AG04449 (cell line): ENCODE measurements at regions of chr11 and their contacts with region 1.

Region 1: DNA sequence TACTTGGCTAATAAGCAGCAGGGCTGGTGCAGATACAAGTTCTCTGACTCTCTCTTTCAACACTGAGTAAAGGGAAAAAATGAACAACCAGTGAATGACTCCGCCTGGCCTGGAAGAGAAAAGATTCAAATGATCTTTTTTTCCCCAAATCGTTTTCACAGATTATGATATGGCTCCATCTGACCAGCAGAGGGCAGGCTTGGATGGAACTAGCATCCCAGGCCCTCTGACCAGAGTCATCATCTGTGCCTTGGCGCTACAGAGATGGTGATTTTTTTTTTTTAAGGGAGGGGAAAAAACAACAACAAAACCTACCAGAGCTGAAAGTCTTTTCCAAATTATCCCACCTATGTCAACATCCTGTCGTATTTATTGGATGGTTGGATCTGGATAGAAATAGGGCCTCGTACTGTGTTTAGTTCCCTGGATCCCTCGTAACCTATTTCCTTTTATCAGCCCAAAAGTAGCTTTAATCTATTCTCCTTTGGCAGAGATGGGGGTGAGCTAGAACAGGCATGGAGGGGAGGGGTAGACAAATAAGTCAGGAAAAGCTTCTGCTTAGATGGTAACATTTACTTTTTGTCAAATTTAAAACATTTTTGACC is 69.7 kb downstream of the PRSS23 start:
- DNase-seq: no peak
- H3K4me3 ChIP-seq: no peak overlapping the region
- CTCF ChIP-seq: peak; percentile 76

Region 2: GRCh38 chr11:86698639-86699400 is 171.2 kb before region 1 on chr11:
- CTCF ChIA-PET with region 1: no interaction called
- POLR2A ChIA-PET with region 1: no interaction called
- DNase-seq: no peak
- H3K4me3 ChIP-seq: no peak overlapping the region
- CTCF ChIP-seq: no peak

Region 3: DNA sequence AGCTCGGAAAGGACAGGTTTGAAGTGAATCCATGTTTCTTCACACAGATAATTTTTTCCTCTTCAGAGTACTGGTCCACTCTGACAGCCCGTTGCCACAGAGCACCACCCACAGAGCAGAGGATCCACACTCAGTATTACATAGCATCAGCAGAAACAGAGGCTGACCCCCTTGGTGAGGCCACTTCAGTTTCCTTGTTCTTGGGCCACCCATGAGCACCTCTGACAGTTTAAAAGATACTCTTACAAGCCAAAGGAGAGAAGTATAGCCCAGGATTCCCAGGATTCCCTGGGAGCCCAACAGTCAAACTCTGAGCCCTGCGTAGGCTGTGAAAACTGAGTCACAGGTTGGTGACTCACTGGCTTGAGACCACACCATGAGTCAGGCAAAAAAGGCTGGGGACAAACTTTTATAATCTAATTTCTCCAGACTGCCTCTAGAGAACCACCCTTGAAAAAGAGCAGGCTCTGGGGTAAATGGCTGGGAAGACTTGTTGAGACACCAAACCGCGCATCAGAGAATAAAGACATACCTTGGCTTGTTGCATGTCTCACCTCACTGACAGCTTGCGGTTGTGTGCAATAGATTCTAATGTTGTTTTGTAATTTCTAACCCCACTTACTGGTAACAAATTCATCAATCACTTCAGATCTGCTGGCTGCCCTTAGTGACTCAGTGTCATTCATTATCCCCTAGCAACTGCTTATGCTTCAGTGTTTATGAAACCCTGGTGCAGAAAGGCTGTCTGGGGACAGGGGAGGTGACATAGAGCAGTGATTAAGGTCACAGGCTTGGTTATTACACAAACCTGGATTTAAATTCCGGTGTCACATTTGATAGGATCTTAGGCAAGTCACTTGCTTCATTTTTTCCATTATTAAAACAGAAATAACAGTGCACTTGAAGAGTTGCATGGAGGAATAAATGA is 126.6 kb before region 1 on chr11:
- CTCF ChIA-PET with region 1: no interaction called
- POLR2A ChIA-PET with region 1: no interaction called
- DNase-seq: peak; percentile 89
- H3K4me3 ChIP-seq: no peak overlapping the region
- CTCF ChIP-seq: no peak

Region 4: GRCh38 chr11:86811637-86812321 is 58.3 kb before region 1 on chr11:
- CTCF ChIA-PET with region 1: no interaction called
- POLR2A ChIA-PET with region 1: no interaction called
- DNase-seq: no peak
- H3K4me3 ChIP-seq: no peak overlapping the region
- CTCF ChIP-seq: no peak

Region 5: GRCh38 chr11:86848861-86849260 is 21.2 kb before region 1 on chr11:
- CTCF ChIA-PET with region 1: interaction called, 18 read pairs
- POLR2A ChIA-PET with region 1: no interaction called
- DNase-seq: no peak
- H3K4me3 ChIP-seq: no peak overlapping the region
- CTCF ChIP-seq: no peak

Region 6: GRCh38 chr11:86896441-86896841 is 26.4 kb after region 1 on chr11:
- CTCF ChIA-PET with region 1: interaction called, 26 read pairs
- POLR2A ChIA-PET with region 1: no interaction called
- DNase-seq: no peak
- H3K4me3 ChIP-seq: no peak overlapping the region
- CTCF ChIP-seq: no peak

Region 7: DNA sequence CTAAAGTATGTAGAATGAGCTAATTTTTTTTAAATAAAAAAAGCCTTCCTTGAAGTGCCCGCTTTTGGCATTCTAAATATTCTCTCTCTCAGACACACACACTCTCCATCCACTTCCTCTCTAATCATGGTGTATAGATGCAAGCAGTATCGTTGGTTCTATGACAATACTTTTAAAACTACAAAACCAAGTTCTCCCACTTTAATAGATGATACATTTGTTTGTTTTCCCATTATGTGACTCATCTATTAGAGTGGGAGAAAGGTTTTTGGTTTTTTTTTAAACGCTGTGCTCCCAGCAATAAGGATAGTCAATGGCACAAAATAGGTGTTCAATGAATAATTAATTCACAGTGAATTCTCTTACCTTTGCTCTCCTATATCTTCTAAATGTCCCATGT is 40.5 kb after region 1 on chr11:
- CTCF ChIA-PET with region 1: interaction called, 397 read pairs
- POLR2A ChIA-PET with region 1: no interaction called
- DNase-seq: no peak
- H3K4me3 ChIP-seq: no peak overlapping the region
- CTCF ChIP-seq: no peak

Region 8: DNA sequence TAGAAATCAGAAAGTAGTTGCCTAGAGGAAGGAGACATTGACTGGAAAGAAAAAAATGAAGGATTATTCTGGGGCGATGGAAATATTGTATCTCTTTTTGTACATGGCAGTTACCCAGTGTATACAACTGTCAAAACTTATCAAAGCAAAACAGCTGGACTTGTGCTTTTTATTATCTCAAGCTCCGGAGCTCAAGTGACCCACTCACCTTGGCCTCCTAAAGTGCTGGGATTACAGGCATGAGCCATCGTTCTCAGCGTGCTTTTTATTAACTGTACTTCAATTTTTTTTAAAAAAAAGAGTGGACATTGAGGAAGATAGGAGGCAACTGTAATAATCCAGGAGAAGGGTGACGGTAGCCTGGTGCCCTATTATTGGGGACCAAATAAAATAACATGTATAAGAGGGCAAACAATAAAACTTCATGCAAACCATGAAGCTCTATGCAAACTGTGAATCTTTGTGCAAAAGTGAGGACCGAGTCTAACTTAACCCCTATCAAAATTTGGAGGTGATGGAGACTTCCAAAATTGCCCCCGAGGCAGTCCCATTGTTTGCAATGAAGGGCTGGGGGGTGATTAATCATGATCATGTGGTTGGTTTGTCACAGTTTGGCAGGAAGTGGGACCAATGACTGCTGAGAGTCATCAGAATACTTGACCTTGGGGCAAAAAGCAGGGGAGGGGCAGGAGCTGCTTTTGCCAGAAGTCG is 61.6 kb after region 1 on chr11:
- CTCF ChIA-PET with region 1: interaction called, 397 read pairs
- POLR2A ChIA-PET with region 1: no interaction called
- DNase-seq: no peak
- H3K4me3 ChIP-seq: no peak overlapping the region
- CTCF ChIP-seq: no peak